ENCODE measurements at regions of chr20 and their contacts with region 1.

Region 1: GRCh38 chr20:17938871-17939619 is 29.5 kb downstream of the SNX5 start:
- DNase-seq: peak in 1 of 2 experiments; percentile 70
- H3K4me3 ChIP-seq: no peak overlapping the region
- H3K27ac ChIP-seq: no peak overlapping the region
- H3K4me1 ChIP-seq: no peaks in the 10 kb centered on the region
- H3K27me3 ChIP-seq: no peaks in the 10 kb centered on the region
- CTCF ChIP-seq: peak; percentile 82

Region 2: GRCh38 chr20:17520583-17520982 is 418.5 kb before region 1 on chr20:
- CTCF ChIA-PET with region 1: no interaction called
- POLR2A ChIA-PET with region 1: no interaction called
- intact Hi-C with region 1: loop called (anchors 5 kb)
- DNase-seq: no peak
- H3K4me3 ChIP-seq: no peak overlapping the region
- H3K27ac ChIP-seq: no peak overlapping the region
- H3K4me1 ChIP-seq: no peaks in the 10 kb centered on the region
- H3K27me3 ChIP-seq: no peaks in the 10 kb centered on the region
- CTCF ChIP-seq: no peak

Region 3: GRCh38 chr20:17594443-17594842 is 344.6 kb before region 1 on chr20:
- CTCF ChIA-PET with region 1: no interaction called
- POLR2A ChIA-PET with region 1: no interaction called
- intact Hi-C with region 1: no loop called
- DNase-seq: peak; percentile 69 to 88
- H3K4me3 ChIP-seq: 0 out of 2 replicates have a peak overlapping the region, but pooled peaks have one; percentile 15
- H3K27ac ChIP-seq: peak overlapping the region; percentile 39
- H3K4me1 ChIP-seq: peaks cover 35% of the 10 kb centered on the region
- H3K27me3 ChIP-seq: no peaks in the 10 kb centered on the region
- CTCF ChIP-seq: no peak

Region 4: DNA sequence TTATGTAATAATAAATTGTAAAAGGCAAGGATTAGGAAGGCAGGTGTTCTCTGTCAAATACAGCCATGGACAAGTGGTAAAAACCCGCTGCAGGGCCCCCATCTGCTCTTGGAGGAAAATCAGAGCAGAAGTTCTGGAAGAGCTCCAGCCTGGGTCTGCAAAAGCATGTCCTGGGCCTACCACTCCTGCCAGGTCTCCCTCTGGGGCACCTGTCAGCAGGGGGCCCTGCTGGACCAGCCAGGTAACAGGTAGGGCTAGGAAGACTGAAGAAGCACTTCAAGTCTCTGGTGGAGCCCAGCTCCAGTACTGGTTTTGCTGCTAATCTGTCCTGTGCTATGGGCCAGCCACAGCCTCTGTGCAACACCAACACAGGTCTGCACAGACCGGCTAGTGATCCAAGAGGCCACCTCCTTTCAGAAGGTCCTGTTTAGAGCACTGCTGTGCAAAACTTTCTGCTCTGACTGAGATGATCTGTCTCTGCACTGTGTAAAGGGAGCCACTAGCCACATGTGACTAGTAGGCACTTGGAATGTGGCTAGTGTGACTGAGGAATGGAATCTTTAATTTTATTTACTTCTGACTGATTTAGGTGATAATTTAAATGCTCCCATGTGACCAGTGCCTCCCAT is 287.2 kb before region 1 on chr20:
- CTCF ChIA-PET with region 1: no interaction called
- POLR2A ChIA-PET with region 1: no interaction called
- intact Hi-C with region 1: loop called (anchors 1 kb)
- DNase-seq: peak in 1 of 2 experiments; percentile 30
- H3K4me3 ChIP-seq: no peak overlapping the region
- H3K27ac ChIP-seq: no peak overlapping the region
- H3K4me1 ChIP-seq: no peaks in the 10 kb centered on the region
- H3K27me3 ChIP-seq: no peaks in the 10 kb centered on the region
- CTCF ChIP-seq: peak; percentile 39; the same call in 1 of the 2 replicates

Region 5: GRCh38 chr20:17771206-17772004 is 167.6 kb before region 1 on chr20:
- CTCF ChIA-PET with region 1: no interaction called
- POLR2A ChIA-PET with region 1: no interaction called
- intact Hi-C with region 1: no loop called
- DNase-seq: no peak
- H3K4me3 ChIP-seq: no peak overlapping the region
- H3K27ac ChIP-seq: no peak overlapping the region
- H3K4me1 ChIP-seq: no peaks in the 10 kb centered on the region
- H3K27me3 ChIP-seq: no peaks in the 10 kb centered on the region; the same call in 1 of the 2 replicates
- CTCF ChIP-seq: no peak